MCF 10A (cell line): ENCODE measurements at regions of chr14 and their contacts with region 1.

Region 1: DNA sequence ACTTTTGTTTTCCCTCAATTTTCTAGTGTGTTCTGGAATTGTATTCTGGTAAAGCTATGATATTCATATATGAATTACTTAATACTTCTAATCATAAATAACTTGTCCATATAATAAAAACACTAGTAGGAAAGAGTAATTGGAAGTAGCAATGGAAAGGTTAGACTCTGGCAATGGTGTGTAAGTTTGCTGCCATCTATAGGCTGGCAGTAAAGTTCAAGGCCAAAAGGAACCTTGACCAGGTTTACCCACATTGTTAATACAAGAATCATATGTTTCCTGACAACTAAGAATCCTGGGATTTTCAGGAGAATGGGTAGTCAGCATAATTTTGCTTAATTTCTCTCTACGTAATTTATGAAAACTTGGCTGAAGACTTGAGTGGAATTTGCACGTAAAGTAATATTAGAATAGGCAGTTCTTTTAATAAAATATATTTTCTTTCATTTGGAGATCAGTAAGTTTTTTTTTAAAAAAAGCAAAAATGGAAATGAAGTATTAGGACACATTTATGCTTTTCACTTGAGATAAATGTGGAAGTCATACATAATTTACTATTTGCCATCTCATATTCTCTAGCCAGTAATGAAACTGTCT is 926.7 kb downstream of the GALC start:
- DNase-seq: peak; percentile 36
- H3K4me3 Mint-ChIP-seq: no peak overlapping the region
- H3K27ac Mint-ChIP-seq: no peak overlapping the region
- H3K4me1 Mint-ChIP-seq: peaks cover 14% of the 10 kb centered on the region
- H3K27me3 Mint-ChIP-seq: no peaks in the 10 kb centered on the region
- CTCF ChIP-seq: peak; percentile 42

Region 2: DNA sequence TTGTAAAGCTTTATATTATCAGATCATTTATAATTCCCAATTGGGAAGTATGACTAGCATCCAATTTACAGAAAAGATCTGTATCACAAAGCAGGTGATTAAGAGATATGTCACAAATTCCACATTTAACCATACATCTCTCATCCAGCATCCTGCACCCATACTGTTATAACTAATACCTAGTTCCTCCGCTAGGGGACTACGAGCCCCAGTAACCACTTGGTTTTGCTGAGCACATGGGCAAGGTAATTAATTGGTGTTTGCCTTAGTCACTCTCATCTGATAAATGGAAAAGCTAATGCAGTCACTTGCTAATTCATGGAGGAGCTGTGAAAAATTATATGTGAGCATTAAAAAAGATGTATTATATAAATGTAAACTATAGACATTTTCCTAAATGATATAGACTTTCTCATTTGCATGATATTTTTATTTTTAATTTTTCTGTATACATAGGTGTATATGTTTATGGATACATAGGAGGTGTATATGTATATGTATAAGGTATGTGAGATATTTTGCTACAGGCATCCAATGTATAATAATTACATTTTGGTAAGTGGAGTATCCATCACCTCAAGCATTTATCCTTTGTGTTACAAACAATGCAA is 105.1 kb before region 1 on chr14:
- CTCF ChIA-PET with region 1: no interaction called
- POLR2A ChIA-PET with region 1: no interaction called
- intact Hi-C with region 1: no loop called
- DNase-seq: peak; percentile 34
- H3K4me3 Mint-ChIP-seq: no peak overlapping the region
- H3K27ac Mint-ChIP-seq: no peak overlapping the region
- H3K4me1 Mint-ChIP-seq: no peaks in the 10 kb centered on the region
- H3K27me3 Mint-ChIP-seq: no peaks in the 10 kb centered on the region
- CTCF ChIP-seq: peak; percentile 45

Region 3: GRCh38 chr14:87049950-87050349 is 16.4 kb before region 1 on chr14:
- CTCF ChIA-PET with region 1: interaction called, 17 read pairs
- POLR2A ChIA-PET with region 1: no interaction called
- intact Hi-C with region 1: no loop called
- DNase-seq: peak; percentile 81
- H3K4me3 Mint-ChIP-seq: no peak overlapping the region
- H3K27ac Mint-ChIP-seq: no peak overlapping the region
- H3K4me1 Mint-ChIP-seq: peaks cover 5% of the 10 kb centered on the region
- H3K27me3 Mint-ChIP-seq: no peaks in the 10 kb centered on the region
- CTCF ChIP-seq: peak; percentile 61

Region 4: GRCh38 chr14:87122166-87122565 is 55.8 kb after region 1 on chr14:
- CTCF ChIA-PET with region 1: no interaction called
- POLR2A ChIA-PET with region 1: no interaction called
- intact Hi-C with region 1: no loop called
- DNase-seq: no peak
- H3K4me3 Mint-ChIP-seq: no peak overlapping the region
- H3K27ac Mint-ChIP-seq: no peak overlapping the region
- H3K4me1 Mint-ChIP-seq: no peaks in the 10 kb centered on the region
- H3K27me3 Mint-ChIP-seq: no peaks in the 10 kb centered on the region
- CTCF ChIP-seq: no peak

Region 5: DNA sequence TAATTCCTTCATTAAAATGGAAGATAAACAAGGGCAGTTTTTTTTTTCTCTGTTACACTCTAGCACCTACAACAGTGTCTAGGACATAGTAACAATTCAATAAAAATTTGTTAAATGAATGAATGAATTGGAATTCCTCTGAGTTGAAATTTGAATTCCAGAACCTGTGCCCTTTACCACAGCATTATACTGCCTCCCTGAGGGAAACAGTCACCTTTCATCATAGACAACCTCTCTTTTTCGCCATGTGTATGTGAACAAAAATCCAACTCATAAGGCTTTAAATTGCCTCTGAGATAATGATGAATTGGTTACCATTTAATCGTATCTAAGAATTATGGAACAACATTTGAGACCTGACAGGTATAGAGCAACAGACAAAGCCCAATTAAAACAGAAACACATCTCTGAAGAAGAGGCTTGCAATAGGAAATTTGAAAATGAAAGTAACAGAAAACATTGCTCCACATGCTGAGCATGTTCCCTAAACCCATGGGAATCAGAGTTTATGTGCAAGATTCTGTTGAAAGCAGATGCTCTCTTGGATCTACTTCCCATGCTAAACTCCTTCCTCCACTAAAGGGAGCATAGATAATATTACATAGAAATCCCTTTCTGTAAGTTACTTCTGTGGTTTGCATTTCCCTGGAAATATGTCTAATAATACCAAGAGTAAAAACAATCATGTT is 268.8 kb after region 1 on chr14:
- CTCF ChIA-PET with region 1: no interaction called
- POLR2A ChIA-PET with region 1: no interaction called
- intact Hi-C with region 1: loop called (anchors 10 kb)
- DNase-seq: peak; percentile 40
- H3K4me3 Mint-ChIP-seq: peak overlapping the region; percentile 66
- H3K27ac Mint-ChIP-seq: no peak overlapping the region
- H3K4me1 Mint-ChIP-seq: peaks cover 14% of the 10 kb centered on the region
- H3K27me3 Mint-ChIP-seq: no peaks in the 10 kb centered on the region
- CTCF ChIP-seq: peak; percentile 28

Region 6: DNA sequence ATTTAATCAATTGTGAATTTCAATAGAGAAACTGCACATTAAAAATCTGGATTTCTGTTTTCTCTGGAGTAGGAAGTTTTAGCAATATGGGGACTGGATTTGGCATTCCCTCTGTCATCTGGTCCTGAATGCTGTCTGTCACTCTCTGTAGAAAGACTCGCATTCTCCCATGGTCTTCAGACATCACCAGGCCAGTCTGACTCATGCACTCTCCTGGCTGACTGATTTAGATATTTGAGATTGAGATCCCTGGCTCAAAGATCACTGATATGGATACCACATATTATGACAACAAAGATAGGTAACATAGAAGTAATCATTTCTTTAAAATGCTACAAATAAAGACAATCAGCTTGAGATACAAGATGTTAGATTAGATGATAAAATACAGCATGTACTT is 402.2 kb after region 1 on chr14:
- CTCF ChIA-PET with region 1: no interaction called
- POLR2A ChIA-PET with region 1: no interaction called
- intact Hi-C with region 1: no loop called
- DNase-seq: no peak
- H3K4me3 Mint-ChIP-seq: no peak overlapping the region
- H3K27ac Mint-ChIP-seq: no peak overlapping the region
- H3K4me1 Mint-ChIP-seq: no peaks in the 10 kb centered on the region
- H3K27me3 Mint-ChIP-seq: no peaks in the 10 kb centered on the region
- CTCF ChIP-seq: no peak

Region 7: DNA sequence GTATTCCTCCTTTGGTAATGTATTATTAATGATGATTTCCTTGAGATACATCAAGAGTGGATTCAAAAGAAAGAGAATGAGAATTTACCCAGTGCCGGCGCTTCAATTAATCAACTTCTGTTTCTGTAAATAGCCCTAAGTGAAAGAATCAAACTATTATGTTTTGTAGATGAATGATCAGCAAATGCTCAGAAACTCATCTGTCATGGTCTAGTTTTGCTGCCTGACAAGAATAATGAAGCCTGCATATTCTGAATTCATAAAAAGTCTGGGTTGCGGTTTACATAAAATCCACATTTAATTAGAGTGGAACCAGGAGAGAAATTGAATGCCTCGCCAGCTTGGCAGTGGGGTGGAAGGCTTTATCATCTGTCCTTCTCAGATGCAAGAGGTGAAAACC is 601.3 kb after region 1 on chr14:
- CTCF ChIA-PET with region 1: no interaction called
- POLR2A ChIA-PET with region 1: no interaction called
- intact Hi-C with region 1: no loop called
- DNase-seq: no peak
- H3K4me3 Mint-ChIP-seq: no peak overlapping the region
- H3K27ac Mint-ChIP-seq: no peak overlapping the region
- H3K4me1 Mint-ChIP-seq: no peaks in the 10 kb centered on the region
- H3K27me3 Mint-ChIP-seq: no peaks in the 10 kb centered on the region
- CTCF ChIP-seq: no peak